ENCODE measurements at regions of chr6 and their contacts with region 1.

Region 1: DNA sequence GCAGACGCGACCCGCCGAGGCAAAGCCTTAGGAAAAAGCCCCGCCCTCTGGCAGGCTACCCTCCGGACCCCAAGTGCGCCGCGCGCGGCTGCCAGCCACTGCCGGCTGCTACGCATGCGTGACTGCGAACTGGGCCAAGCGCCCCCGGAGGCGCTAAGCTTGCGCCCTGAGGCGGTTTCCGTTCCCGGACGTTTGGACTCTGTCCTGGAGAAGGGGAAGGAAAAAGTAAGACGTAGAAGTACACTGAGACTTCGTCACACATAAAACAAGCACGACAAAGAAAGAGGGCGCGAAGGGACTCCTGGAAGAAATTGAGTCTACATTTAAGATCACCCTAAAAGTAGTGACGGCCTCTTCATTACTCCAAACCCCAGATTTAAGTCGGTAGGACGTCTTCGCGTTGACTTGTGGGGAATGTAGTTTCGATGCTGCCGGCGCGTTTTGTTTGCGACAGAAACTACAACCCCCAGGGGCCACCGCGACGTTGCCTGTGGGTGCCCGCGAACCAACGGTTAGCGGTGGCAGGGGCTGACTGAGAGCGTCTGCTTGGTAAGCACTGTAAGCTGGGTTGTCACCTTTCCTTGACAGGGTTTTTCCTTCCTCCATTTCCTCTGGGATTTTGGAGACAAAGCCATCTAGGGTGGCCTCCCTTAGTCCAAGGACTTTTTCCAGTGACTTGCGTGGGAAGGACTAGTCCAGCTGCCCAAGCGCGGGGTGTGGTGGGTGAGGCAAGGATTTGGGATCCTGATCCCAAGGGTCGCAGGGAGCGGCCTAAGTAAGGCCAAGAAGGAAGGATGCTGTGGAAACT is at the start of gene CEP57L1:
- DNase-seq: peak; percentile 86
- ATAC-seq: peak; percentile 71
- H3K4me3 Mint-ChIP-seq: peak within 1 kb of the TSS; percentile 97
- H3K27ac Mint-ChIP-seq: peak within 1 kb of the TSS; percentile 100
- H3K4me1 Mint-ChIP-seq: peaks cover 46% of the 10 kb centered on the region
- H3K27me3 Mint-ChIP-seq: no peaks in the 10 kb centered on the region
- CTCF ChIP-seq: no peak
- total RNA-seq, gene CEP57L1: 4.7 and 6.1 TPM in 2 replicates

Region 2: DNA sequence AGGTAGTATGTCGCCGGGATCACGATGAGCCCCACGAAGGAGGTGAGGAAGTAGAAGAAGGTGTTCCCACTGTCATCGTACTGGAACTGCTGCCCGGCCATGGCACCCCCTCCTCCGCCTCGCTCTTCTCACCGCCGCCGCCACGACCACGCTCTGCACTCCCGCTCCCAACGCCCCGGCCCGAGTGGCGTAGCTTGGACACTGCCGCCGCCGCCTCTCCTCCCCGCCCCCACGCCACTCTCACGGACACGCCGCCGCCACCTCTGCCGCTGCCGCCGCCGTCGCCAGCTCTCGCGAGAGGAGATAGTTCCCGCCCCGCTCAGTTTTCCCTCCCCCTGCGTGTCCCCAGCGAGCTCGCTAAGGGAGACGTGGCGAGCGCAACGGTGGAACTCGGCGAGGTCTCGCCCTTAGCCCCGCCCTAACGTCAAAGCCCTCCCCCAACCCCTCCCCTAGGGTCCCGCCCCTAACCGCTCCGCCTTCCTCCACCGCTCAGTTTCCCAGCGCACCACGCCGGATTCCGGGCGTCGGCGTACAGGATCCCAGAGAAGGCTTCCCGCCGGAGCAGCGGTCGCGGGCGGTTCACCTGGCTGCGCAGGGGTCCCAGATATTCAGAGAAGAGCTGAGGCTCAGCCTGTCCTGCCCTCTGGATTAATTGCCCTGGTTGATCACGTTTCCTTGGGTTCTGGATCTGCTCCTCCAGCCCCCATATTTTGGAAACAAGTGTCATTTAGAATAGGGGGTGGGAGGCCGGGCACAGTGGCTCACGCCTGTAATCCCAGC is 1137.1 kb before region 1 on chr6 and contains the start of gene SEC63:
- CTCF ChIA-PET with region 1: no interaction called
- POLR2A ChIA-PET with region 1: interaction called, 3 read pairs
- intact Hi-C with region 1: loop called (anchors 2 kb)
- DNase-seq: peak; percentile 95
- ATAC-seq: peak; percentile 97
- H3K4me3 Mint-ChIP-seq: peak within 1 kb of the TSS; percentile 98
- H3K27ac Mint-ChIP-seq: peak within 1 kb of the TSS; percentile 94
- H3K4me1 Mint-ChIP-seq: peaks cover 27% of the 10 kb centered on the region
- H3K27me3 Mint-ChIP-seq: no peaks in the 10 kb centered on the region
- CTCF ChIP-seq: no peak
- total RNA-seq, gene SEC63: 64.4 and 68.3 TPM in 2 replicates

Region 3: GRCh38 chr6:108294727-108295625 is 800.3 kb before region 1 on chr6 and contains the start of gene AFG1L:
- CTCF ChIA-PET with region 1: no interaction called
- POLR2A ChIA-PET with region 1: interaction called, 4 read pairs
- intact Hi-C with region 1: loop called (anchors 10 kb)
- DNase-seq: peak; percentile 89
- ATAC-seq: peak; percentile 92
- H3K4me3 Mint-ChIP-seq: peak within 1 kb of the TSS; percentile 99
- H3K27ac Mint-ChIP-seq: peak within 1 kb of the TSS; percentile 100
- H3K4me1 Mint-ChIP-seq: peaks cover 30% of the 10 kb centered on the region
- H3K27me3 Mint-ChIP-seq: no peaks in the 10 kb centered on the region
- CTCF ChIP-seq: no peak
- total RNA-seq, gene AFG1L: 7.5 and 10.3 TPM in 2 replicates

Region 4: GRCh38 chr6:109009236-109009961 is 85.8 kb before region 1 on chr6:
- CTCF ChIA-PET with region 1: no interaction called
- POLR2A ChIA-PET with region 1: interaction called, 21 read pairs
- intact Hi-C with region 1: loop called (anchors 1 kb)
- DNase-seq: peak; percentile 87
- ATAC-seq: peak; percentile 97
- H3K4me3 Mint-ChIP-seq: peak overlapping the region; percentile 97
- H3K27ac Mint-ChIP-seq: peak overlapping the region; percentile 95
- H3K4me1 Mint-ChIP-seq: peaks cover 65% of the 10 kb centered on the region
- H3K27me3 Mint-ChIP-seq: no peaks in the 10 kb centered on the region
- CTCF ChIP-seq: no peak

Region 5: DNA sequence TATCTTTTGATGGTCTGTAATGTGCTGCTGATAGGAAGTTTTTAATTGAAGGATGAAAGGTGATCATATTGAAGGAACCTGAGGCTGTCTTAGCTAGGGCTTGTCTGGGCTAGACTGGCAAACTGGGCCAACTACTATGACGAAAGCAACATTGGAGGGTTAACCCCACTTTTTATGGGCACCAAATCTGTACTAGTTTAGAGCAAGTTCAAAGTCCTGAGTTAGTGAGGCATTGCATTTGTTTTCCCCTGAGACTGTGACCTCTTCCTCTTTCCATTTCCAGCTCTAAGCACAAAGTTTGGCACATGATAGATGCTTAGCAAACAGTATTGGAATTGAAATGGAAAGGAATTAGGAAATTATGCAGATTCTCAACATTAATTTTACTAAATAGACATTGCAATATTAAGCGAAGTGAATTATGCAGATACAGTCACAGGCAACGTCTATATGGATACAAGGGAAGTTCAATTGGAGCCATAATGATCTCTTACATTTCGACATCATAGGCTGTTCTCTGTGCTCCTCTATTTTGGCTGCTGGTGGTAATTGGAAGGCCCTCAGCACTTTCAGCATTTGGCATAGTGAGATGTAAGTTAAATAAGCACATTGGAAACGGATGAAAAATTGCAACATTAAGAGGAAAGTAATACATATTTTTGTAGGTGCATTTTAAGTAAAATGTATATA is 22.3 kb after region 1 on chr6:
- CTCF ChIA-PET with region 1: interaction called, 3 read pairs
- POLR2A ChIA-PET with region 1: interaction called, 20 read pairs
- intact Hi-C with region 1: loop called (anchors 1 kb)
- DNase-seq: no peak
- ATAC-seq: peak; percentile 97
- H3K4me3 Mint-ChIP-seq: peak overlapping the region; percentile 17
- H3K27ac Mint-ChIP-seq: peak overlapping the region; percentile 57
- H3K4me1 Mint-ChIP-seq: peaks cover 45% of the 10 kb centered on the region
- H3K27me3 Mint-ChIP-seq: no peaks in the 10 kb centered on the region
- CTCF ChIP-seq: no peak

Region 6: DNA sequence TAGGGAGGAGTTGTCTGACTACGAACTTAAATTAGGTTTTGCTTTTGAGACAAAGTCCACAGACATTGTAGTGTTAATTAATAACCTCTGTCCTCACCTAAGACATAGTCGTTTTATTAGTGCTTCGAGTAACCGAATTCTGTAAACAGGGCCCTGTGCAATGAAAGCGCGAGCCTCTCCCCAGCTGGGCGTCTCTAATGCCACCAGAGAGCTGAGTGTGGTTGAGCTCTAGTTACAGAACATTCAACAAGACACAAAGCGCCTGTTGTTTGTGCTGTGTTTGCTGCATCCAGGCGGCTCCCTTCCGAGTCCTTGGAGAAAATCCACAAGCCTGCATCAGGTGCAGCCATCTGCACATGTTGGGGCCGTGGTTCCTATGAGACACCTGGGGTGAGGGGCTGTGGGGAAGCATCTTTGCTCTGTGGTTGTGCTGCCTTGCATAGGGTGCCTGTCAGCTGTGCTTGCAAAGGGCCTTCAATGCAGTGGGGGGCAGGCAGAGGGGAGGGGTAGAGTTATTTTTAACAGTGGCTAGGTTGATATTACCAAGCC is 223.2 kb after region 1 on chr6:
- CTCF ChIA-PET with region 1: no interaction called
- POLR2A ChIA-PET with region 1: no interaction called
- intact Hi-C with region 1: no loop called
- DNase-seq: no peak
- ATAC-seq: no peak
- H3K4me3 Mint-ChIP-seq: no peak overlapping the region
- H3K27ac Mint-ChIP-seq: no peak overlapping the region
- H3K4me1 Mint-ChIP-seq: peaks cover 10% of the 10 kb centered on the region
- H3K27me3 Mint-ChIP-seq: no peaks in the 10 kb centered on the region
- CTCF ChIP-seq: no peak

Region 7: DNA sequence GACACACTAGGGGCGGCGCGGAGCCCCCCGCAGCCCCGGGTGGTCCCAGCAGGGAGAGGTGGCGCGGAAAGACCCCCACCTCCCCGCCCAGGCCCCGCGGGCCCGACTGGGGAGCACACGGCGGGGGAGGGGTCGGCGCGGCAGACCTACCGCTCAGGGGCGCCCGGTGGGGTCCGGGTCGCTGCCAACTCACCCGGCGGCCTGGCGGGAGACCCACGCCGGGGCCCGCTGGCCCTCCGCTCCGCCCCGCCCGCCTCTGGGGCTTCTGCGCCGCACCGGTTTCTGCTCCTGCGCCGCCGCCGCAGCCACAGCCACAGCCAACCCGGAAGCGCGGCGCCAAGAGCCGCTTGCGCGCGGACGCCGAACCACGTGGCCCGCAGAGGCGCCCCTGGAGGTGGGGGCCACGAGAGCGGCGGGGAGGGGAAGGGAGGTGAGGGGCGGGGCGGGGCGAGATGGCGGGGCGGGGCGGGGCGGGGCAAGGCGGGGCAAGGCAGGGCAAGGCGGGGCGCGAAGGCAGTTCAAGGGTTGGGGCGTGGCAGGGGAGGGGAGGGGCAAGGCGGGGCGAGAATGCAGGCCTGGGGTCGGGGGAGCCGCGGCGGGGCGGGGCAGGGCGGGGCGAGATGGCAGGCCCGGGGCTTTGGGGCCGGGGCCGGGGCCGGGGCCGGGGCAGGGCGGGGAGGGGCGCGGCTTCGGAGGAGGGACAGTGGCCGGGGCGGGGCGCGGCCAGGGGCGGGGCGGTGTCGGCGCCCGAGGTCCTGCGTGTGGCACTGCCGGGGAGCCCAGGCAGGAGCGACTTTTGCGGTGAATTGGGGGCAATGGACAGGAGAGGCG is 387.9 kb after region 1 on chr6 and contains the start of gene ZBTB24:
- CTCF ChIA-PET with region 1: no interaction called
- POLR2A ChIA-PET with region 1: interaction called, 3 read pairs
- intact Hi-C with region 1: loop called (anchors 1 kb)
- DNase-seq: peak; percentile 81
- ATAC-seq: peak; percentile 82
- H3K4me3 Mint-ChIP-seq: peak within 1 kb of the TSS; percentile 95
- H3K27ac Mint-ChIP-seq: peak within 1 kb of the TSS; percentile 85
- H3K4me1 Mint-ChIP-seq: peaks cover 52% of the 10 kb centered on the region
- H3K27me3 Mint-ChIP-seq: no peaks in the 10 kb centered on the region
- CTCF ChIP-seq: no peak
- total RNA-seq, gene ZBTB24: 22.8 and 25.4 TPM in 2 replicates

Measured in activated B cell treated with CpG ODN at 0.5 μM for 24 hours (primary cell).